OCI-LY7 (cell line): ENCODE measurements at regions of chr10 and their contacts with region 1.

Region 1: GRCh38 chr10:48670978-48671913 is 13.4 kb upstream of the WDFY4 start:
- DNase-seq: peak; percentile 96
- H3K4me3 ChIP-seq: peak overlapping the region; percentile 65
- H3K27ac ChIP-seq: peak overlapping the region; percentile 97
- H3K4me1 ChIP-seq: peaks cover 78% of the 10 kb centered on the region
- CTCF ChIP-seq: no peak

Region 2: GRCh38 chr10:48279081-48279751 is 392.0 kb before region 1 on chr10:
- CTCF ChIA-PET with region 1: no interaction called
- POLR2A ChIA-PET with region 1: no interaction called
- intact Hi-C with region 1: no loop called
- DNase-seq: no peak
- H3K4me3 ChIP-seq: no peak overlapping the region
- H3K27ac ChIP-seq: no peak overlapping the region
- H3K4me1 ChIP-seq: no peaks in the 10 kb centered on the region
- CTCF ChIP-seq: no peak

Region 3: DNA sequence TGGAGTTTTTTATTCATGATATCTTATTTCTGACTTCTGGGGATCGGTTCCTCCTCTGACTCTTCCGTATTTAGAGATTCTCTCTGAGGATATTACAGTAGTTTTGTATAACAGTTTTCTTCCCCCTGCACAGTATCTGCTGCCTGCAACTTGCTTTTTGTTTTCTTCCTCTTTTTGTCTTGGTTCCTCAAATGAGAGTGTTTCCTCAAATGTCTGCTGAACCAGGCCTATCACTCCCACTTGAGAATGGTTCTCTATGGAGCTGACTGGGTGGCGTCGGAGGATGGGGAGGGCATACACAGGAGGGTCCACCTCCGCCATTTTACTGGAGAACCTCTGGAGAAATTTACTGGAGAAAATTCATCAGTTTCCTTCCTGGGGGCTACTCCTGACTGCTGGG is 94.1 kb before region 1 on chr10:
- CTCF ChIA-PET with region 1: no interaction called
- POLR2A ChIA-PET with region 1: interaction called, 9 read pairs
- intact Hi-C with region 1: loop called (anchors 2 kb)
- DNase-seq: peak; percentile 84
- H3K4me3 ChIP-seq: peak overlapping the region; percentile 21
- H3K27ac ChIP-seq: peak overlapping the region; percentile 95
- H3K4me1 ChIP-seq: peaks cover 92% of the 10 kb centered on the region
- CTCF ChIP-seq: no peak

Region 4: DNA sequence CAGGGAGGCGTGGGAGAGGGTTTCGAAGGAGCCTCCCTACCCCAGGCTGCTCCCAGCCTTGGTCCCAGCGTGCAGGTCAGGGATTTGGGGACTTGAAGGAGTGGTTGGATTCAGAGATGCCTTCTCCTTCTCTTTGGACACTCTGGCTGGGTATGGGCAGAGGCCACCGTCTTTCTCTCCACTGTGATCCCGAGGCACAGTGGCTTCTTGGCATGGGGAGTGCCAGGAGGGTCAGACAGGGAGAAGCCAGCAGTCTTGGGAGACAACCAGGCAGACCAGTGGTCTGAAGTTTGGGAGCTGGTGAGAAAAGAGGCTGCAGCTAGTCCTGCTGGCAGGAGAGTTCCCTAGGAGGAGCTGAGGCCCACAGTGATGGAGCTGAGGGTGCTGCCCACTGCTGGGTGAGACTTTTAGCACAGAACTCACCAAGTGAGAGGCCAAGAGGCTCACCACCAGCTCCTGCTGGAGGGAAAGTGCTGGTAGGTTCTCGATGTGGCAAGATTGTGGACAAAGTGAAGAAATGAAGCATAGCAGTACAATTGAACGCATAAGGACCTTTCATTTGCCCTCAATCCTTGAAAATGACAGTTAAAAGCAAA is 21.8 kb before region 1 on chr10:
- CTCF ChIA-PET with region 1: no interaction called
- POLR2A ChIA-PET with region 1: no interaction called
- intact Hi-C with region 1: no loop called
- DNase-seq: no peak
- H3K4me3 ChIP-seq: no peak overlapping the region
- H3K27ac ChIP-seq: no peak overlapping the region
- H3K4me1 ChIP-seq: peaks cover 6% of the 10 kb centered on the region
- CTCF ChIP-seq: no peak

Region 5: GRCh38 chr10:48684792-48685623 is 13.8 kb after region 1 on chr10 and contains the start of gene WDFY4:
- CTCF ChIA-PET with region 1: interaction called, 4 read pairs
- POLR2A ChIA-PET with region 1: interaction called, 71 read pairs
- intact Hi-C with region 1: loop called (anchors 1 kb)
- DNase-seq: peak; percentile 85
- H3K4me3 ChIP-seq: peak within 1 kb of the TSS; percentile 76
- H3K27ac ChIP-seq: peak within 1 kb of the TSS; percentile 95
- H3K4me1 ChIP-seq: peaks cover 65% of the 10 kb centered on the region
- CTCF ChIP-seq: no peak
- total RNA-seq, gene WDFY4: 41.6 and 51.5 TPM in 2 replicates

Region 6: GRCh38 chr10:48802611-48803071 is 131.4 kb after region 1 on chr10:
- CTCF ChIA-PET with region 1: no interaction called
- POLR2A ChIA-PET with region 1: no interaction called
- intact Hi-C with region 1: loop called (anchors 5 kb)
- DNase-seq: peak; percentile 46
- H3K4me3 ChIP-seq: no peak overlapping the region
- H3K27ac ChIP-seq: peak overlapping the region; percentile 7
- H3K4me1 ChIP-seq: peaks cover 34% of the 10 kb centered on the region
- CTCF ChIP-seq: no peak